Body of pancreas (tissue), 4 donors: ENCODE measurements at regions of chr1 and their contacts with region 1.

Region 1: DNA sequence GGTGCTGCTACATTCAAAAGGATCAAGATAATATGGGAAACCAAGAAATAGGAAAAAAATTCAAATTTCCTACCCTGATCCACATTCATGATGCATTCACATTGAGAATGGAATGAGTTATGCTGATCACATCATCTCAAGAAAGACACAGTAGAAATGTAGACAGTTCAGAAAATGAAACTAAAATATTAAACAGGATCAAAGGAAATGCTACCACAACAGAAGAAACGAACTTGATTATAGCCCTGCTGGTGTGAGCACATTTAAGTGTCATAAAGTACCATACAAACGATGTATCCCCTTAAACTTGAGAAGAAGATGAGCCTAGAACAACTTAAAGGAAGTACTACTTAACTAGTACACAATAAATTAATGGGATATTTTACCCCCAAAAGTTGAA is 21.3 kb downstream of the SYDE2 start:
- DNase-seq: no peak
- ATAC-seq: no peak
- H3K4me3 ChIP-seq: no peak overlapping the region
- H3K27ac ChIP-seq: no peak overlapping the region
- H3K4me1 ChIP-seq: peaks cover 6% of the 10 kb centered on the region
- H3K27me3 ChIP-seq: no peaks in the 10 kb centered on the region
- CTCF ChIP-seq: no peak
- POLR2A ChIP-seq: no peak

Region 2: DNA sequence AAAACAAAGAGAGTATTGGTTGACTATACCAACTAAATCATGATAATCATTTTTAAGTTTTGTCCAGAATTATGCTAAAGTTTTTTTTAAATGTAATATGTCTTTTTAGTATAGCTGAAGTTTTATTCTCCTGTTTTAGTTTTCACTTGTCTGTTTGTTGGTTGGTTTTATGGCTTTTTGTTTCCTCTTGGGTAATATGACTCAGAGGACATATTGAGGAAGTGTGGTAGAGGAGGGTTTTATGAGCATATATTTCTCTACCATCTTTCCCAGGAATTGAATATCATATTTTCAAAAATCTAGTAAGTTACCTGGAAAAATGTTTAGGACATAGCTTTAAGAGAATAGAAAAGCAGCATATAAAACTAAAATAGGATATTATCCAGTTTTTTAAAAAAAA is 62.7 kb before region 1 on chr1:
- intact Hi-C with region 1: loop called (anchors 10 kb)
- DNase-seq: no peak
- ATAC-seq: no peak
- H3K4me3 ChIP-seq: no peak overlapping the region
- H3K27ac ChIP-seq: no peak overlapping the region
- H3K4me1 ChIP-seq: peaks cover 7% of the 10 kb centered on the region
- H3K27me3 ChIP-seq: no peaks in the 10 kb centered on the region
- CTCF ChIP-seq: no peak
- POLR2A ChIP-seq: no peak

Region 3: GRCh38 chr1:85438353-85438752 is 258.8 kb after region 1 on chr1:
- intact Hi-C with region 1: no loop called
- DNase-seq: no peak
- ATAC-seq: no peak
- H3K4me3 ChIP-seq: no peak overlapping the region
- H3K27ac ChIP-seq: no peak overlapping the region
- H3K4me1 ChIP-seq: no peaks in the 10 kb centered on the region
- H3K27me3 ChIP-seq: no peaks in the 10 kb centered on the region
- CTCF ChIP-seq: no peak
- POLR2A ChIP-seq: no peak